PC-9 (cell line): ENCODE measurements at regions of chr1 and their contacts with region 1.

Region 1: GRCh38 chr1:221435504-221435904 is 306.4 kb downstream of the DUSP10 start:
- DNase-seq: peak in 1 of 2 experiments; percentile 45
- H3K4me3 ChIP-seq: no peak overlapping the region
- H3K27ac ChIP-seq: no peak overlapping the region
- H3K4me1 ChIP-seq: peaks cover 20% of the 10 kb centered on the region
- H3K27me3 ChIP-seq: no peaks in the 10 kb centered on the region
- CTCF ChIP-seq: peak; percentile 98

Region 2: GRCh38 chr1:220810179-220810653 is 625.3 kb before region 1 on chr1:
- CTCF ChIA-PET with region 1: no interaction called
- POLR2A ChIA-PET with region 1: no interaction called
- intact Hi-C with region 1: loop called (anchors 2 kb)
- DNase-seq: peak in 1 of 2 experiments; percentile 31
- H3K4me3 ChIP-seq: no peak overlapping the region
- H3K27ac ChIP-seq: no peak overlapping the region
- H3K4me1 ChIP-seq: no peaks in the 10 kb centered on the region
- H3K27me3 ChIP-seq: no peaks in the 10 kb centered on the region
- CTCF ChIP-seq: peak; percentile 87

Region 3: DNA sequence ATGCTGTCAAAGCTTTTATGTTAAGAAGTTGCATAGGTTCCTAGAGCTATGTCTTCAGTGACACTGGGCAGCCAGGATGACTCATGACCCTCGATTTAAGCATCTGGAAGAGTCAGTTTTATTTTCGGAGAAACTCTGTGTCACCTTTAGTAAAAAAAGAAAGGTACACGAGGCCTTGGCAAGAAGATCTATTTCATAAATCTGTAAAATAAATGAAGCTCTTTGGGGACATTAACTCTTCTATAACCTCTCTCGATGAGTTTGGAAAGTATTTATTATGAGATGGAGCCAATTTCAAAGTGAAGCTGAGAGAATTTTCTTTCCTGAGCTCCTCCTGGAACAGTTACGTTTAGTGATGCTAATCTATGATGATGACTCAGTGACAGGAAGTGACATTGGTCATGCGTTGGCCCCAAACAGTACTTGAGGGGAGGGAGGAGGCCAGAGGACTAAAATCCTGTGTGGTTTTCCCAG is 399.8 kb before region 1 on chr1:
- CTCF ChIA-PET with region 1: no interaction called
- POLR2A ChIA-PET with region 1: no interaction called
- intact Hi-C with region 1: loop called (anchors 5 kb)
- DNase-seq: peak; percentile 36 to 53
- H3K4me3 ChIP-seq: peak overlapping the region; percentile 40; the same call in 1 of the 2 replicates
- H3K27ac ChIP-seq: peak overlapping the region; percentile 72
- H3K4me1 ChIP-seq: peaks cover 14% of the 10 kb centered on the region
- H3K27me3 ChIP-seq: no peaks in the 10 kb centered on the region
- CTCF ChIP-seq: no peak

Region 4: DNA sequence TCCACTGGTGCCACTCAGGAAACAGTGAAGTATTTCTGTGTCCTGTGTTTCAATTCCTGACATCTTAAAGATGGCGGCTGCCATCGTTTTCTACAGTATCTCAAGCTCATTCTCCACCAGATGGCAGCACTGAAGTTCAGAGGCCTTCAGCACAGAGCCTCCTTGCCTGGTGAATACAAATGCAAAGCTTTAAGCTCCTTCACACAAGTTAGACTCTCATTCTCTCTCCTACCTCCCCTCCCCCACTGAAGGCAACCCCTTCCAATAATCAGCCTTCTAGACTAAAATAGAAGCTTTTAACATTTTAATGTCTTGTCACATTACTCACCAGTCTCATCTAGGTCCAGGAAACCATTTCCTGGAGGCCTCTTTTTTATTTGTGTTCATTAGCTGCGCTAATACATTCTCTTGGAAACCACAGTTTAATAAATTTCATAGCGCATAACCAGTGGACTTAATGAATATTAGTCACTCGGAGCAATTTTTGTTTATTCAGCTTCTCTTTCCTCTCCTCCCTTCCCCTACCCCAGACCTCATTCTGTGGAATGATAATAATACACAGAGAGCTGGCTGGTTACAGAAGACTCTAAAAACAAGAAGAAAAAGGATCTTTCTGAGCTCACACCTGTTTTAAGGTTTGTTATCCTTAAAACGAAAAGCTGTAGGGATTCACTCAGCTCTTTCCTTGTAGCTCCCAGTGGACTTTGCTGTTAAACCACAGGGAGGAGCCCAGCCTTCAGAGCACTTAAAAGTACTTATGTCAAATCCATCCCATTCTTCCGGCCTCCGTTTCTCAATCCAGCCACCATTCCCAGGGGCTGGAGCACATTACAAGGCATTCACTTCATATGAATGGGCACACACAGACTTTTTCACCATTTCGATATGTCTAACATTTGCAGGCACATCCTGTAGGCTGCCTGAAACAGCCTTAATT is 171.4 kb before region 1 on chr1:
- CTCF ChIA-PET with region 1: interaction called, 16 read pairs
- POLR2A ChIA-PET with region 1: no interaction called
- intact Hi-C with region 1: loop called (anchors 1 kb)
- DNase-seq: peak; percentile 36 to 44
- H3K4me3 ChIP-seq: no peak overlapping the region
- H3K27ac ChIP-seq: no peak overlapping the region
- H3K4me1 ChIP-seq: no peaks in the 10 kb centered on the region
- H3K27me3 ChIP-seq: no peaks in the 10 kb centered on the region
- CTCF ChIP-seq: peak; percentile 57

Region 5: GRCh38 chr1:221478050-221478949 is 42.8 kb after region 1 on chr1:
- CTCF ChIA-PET with region 1: interaction called, 3 read pairs
- POLR2A ChIA-PET with region 1: interaction called, 3 read pairs
- intact Hi-C with region 1: loop called (anchors 2 kb)
- DNase-seq: peak; percentile 74 to 80
- H3K4me3 ChIP-seq: no peak overlapping the region
- H3K27ac ChIP-seq: no peak overlapping the region
- H3K4me1 ChIP-seq: peaks cover 13% of the 10 kb centered on the region
- H3K27me3 ChIP-seq: no peaks in the 10 kb centered on the region
- CTCF ChIP-seq: peak; percentile 79

Region 6: DNA sequence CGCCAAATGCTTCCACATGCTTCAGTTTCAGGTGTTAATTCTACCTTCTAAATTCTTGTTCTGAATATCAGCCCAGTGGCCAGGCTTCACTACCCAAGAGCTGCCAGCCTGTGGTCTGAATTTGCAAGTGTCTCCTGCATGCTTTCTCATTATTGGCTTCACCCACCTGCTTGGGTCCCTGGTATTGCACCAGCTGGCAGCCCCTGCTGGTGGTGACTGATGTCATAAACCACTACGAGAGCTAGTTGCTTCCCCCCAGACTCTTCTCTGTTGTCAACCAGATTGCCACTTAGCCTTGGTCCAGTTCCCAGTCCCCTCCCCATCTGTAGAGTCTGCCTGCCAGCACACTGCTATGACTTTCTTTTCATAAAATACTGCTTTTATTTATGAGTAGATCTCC is 504.1 kb after region 1 on chr1:
- CTCF ChIA-PET with region 1: interaction called, 10 read pairs
- POLR2A ChIA-PET with region 1: no interaction called
- intact Hi-C with region 1: no loop called
- DNase-seq: no peak
- H3K4me3 ChIP-seq: no peak overlapping the region
- H3K27ac ChIP-seq: no peak overlapping the region
- H3K4me1 ChIP-seq: no peaks in the 10 kb centered on the region
- H3K27me3 ChIP-seq: no peaks in the 10 kb centered on the region
- CTCF ChIP-seq: no peak